ENCODE measurements at regions of chr2 and their contacts with region 1.

Region 1: GRCh38 chr2:17672583-17673317 is 80.9 kb downstream of the SMC6 start:
- DNase-seq: no peak
- ATAC-seq: no peak
- H3K4me3 ChIP-seq: no peak overlapping the region
- H3K4me3 Mint-ChIP-seq: no peak overlapping the region
- H3K27ac ChIP-seq: peak overlapping the region in 1 of 2 donors; percentile 22
- H3K27ac Mint-ChIP-seq: no peak overlapping the region
- H3K4me1 ChIP-seq: no peaks in the 10 kb centered on the region
- H3K4me1 Mint-ChIP-seq: no peaks in the 10 kb centered on the region
- H3K27me3 ChIP-seq: no peaks in the 10 kb centered on the region
- H3K27me3 Mint-ChIP-seq: no peaks in the 10 kb centered on the region
- CTCF ChIP-seq: no peak

Region 2: GRCh38 chr2:16773080-16773713 is 899.6 kb before region 1 on chr2:
- CTCF ChIA-PET with region 1: interaction called, 11 read pairs
- POLR2A ChIA-PET with region 1: no interaction called
- intact Hi-C with region 1: no loop called
- DNase-seq: peak; percentile 47
- ATAC-seq: peak; percentile 71
- H3K4me3 ChIP-seq: no peak overlapping the region
- H3K4me3 Mint-ChIP-seq: no peak overlapping the region
- H3K27ac ChIP-seq: no peak overlapping the region
- H3K27ac Mint-ChIP-seq: no peak overlapping the region
- H3K4me1 ChIP-seq: no peaks in the 10 kb centered on the region
- H3K4me1 Mint-ChIP-seq: peaks cover 2% of the 10 kb centered on the region
- H3K27me3 ChIP-seq: peaks cover 0 to 4% (median under 1%) of the 10 kb centered on the region in 4 experiments
- H3K27me3 Mint-ChIP-seq: peaks cover 19% of the 10 kb centered on the region
- CTCF ChIP-seq: peak; percentile 81

Region 3: DNA sequence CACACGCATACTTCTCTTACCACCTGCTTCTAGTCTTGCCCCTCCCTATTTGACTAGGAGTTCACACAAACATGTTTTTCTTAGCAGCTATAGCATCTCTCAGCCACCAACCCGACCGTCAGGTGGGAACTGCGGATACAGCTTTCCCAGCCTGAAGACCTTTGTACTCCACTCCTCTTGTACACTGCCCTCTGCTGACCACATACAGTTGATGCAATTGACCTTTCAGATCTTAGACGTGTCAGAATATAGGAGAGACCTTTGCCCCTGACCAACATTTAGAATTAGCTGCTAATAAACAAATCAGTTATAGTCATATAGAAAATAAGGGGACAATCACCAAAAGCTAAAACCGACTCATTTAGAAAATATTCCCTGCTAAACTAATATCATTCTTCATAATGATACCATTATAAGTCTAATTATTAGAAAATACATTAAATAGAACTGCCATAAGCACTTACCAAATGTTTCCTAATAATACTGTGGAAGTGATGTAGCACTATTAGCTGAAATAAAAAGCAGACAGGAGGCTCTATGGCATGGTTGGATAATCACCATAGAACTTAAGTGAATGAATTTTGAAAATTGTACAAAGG is 362.9 kb before region 1 on chr2:
- CTCF ChIA-PET with region 1: interaction called, 4 read pairs
- POLR2A ChIA-PET with region 1: no interaction called
- intact Hi-C with region 1: loop called (anchors 2 kb)
- DNase-seq: peak; percentile 58
- ATAC-seq: peak; percentile 76
- H3K4me3 ChIP-seq: no peak overlapping the region
- H3K4me3 Mint-ChIP-seq: no peak overlapping the region
- H3K27ac ChIP-seq: no peak overlapping the region
- H3K27ac Mint-ChIP-seq: no peak overlapping the region
- H3K4me1 ChIP-seq: no peaks in the 10 kb centered on the region
- H3K4me1 Mint-ChIP-seq: peaks cover 7% of the 10 kb centered on the region
- H3K27me3 ChIP-seq: no peaks in the 10 kb centered on the region
- H3K27me3 Mint-ChIP-seq: no peaks in the 10 kb centered on the region
- CTCF ChIP-seq: peak; percentile 77

Region 4: GRCh38 chr2:17646081-17646554 is 26.6 kb before region 1 on chr2:
- CTCF ChIA-PET with region 1: interaction called, 51 read pairs
- POLR2A ChIA-PET with region 1: no interaction called
- intact Hi-C with region 1: loop called (anchors 1 kb)
- DNase-seq: peak; percentile 62
- ATAC-seq: peak; percentile 56
- H3K4me3 ChIP-seq: no peak overlapping the region
- H3K4me3 Mint-ChIP-seq: no peak overlapping the region
- H3K27ac ChIP-seq: no peak overlapping the region
- H3K27ac Mint-ChIP-seq: no peak overlapping the region
- H3K4me1 ChIP-seq: peaks cover 0 to 3% of the 10 kb centered on the region in 2 donors
- H3K4me1 Mint-ChIP-seq: peaks cover 9% of the 10 kb centered on the region
- H3K27me3 ChIP-seq: no peaks in the 10 kb centered on the region
- H3K27me3 Mint-ChIP-seq: no peaks in the 10 kb centered on the region
- CTCF ChIP-seq: peak; percentile 80

Region 5: DNA sequence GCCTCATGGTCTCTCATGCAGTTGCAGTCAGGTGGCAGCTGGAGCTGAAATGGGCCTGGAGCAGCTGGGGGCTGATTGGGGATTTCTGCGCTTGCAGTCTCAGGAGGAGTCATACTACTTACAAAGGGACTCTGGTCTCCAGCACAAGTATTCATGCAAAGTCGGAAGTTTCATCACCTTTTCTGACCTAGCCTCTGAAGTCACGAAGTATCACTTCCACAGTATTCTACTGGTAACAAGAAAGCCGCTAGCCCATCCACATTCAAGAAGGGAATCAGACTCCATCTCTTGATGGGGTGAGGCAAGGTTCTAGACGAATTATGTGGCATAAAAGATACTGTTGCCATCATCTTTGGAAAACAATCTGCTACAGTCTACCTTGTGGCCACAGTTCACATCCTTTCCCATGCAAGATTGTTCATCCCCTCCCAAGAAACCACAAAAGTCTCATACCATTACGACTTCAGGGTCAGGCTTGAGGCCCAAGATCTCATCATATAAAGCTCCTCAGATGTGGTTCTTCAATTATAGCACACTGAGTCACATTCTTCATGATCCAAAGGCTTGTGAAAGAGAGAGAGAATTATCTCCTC is 14.4 kb before region 1 on chr2:
- CTCF ChIA-PET with region 1: interaction called, 34 read pairs
- POLR2A ChIA-PET with region 1: no interaction called
- intact Hi-C with region 1: no loop called
- DNase-seq: no peak
- ATAC-seq: no peak
- H3K4me3 ChIP-seq: no peak overlapping the region
- H3K4me3 Mint-ChIP-seq: no peak overlapping the region
- H3K27ac ChIP-seq: no peak overlapping the region
- H3K27ac Mint-ChIP-seq: no peak overlapping the region
- H3K4me1 ChIP-seq: no peaks in the 10 kb centered on the region
- H3K4me1 Mint-ChIP-seq: no peaks in the 10 kb centered on the region
- H3K27me3 ChIP-seq: no peaks in the 10 kb centered on the region
- H3K27me3 Mint-ChIP-seq: no peaks in the 10 kb centered on the region
- CTCF ChIP-seq: no peak

Region 6: DNA sequence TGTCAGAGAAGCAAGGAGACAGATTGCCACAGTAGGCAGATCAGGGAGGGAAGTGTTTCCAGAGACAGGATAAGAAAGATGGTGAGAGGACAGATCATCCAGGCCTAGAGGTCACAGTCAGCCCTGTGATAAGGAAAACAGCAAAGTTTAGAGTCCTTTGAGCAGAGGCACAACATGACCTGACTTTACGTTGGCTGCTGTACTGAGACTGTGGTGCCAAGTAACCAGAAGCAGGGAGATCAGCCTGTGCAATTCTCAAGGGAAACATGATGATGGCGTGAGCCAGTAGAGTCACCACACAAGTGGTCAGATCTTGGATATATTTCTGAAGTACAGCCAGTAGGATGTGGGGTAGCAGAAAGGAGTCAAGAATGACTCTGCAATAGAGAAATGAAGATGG is 37.1 kb after region 1 on chr2:
- CTCF ChIA-PET with region 1: interaction called, 11 read pairs
- POLR2A ChIA-PET with region 1: no interaction called
- intact Hi-C with region 1: no loop called
- DNase-seq: no peak
- ATAC-seq: no peak
- H3K4me3 ChIP-seq: no peak overlapping the region
- H3K4me3 Mint-ChIP-seq: no peak overlapping the region
- H3K27ac ChIP-seq: peak overlapping the region in 1 of 2 donors; percentile 3
- H3K27ac Mint-ChIP-seq: no peak overlapping the region
- H3K4me1 ChIP-seq: no peaks in the 10 kb centered on the region
- H3K4me1 Mint-ChIP-seq: no peaks in the 10 kb centered on the region
- H3K27me3 ChIP-seq: no peaks in the 10 kb centered on the region
- H3K27me3 Mint-ChIP-seq: no peaks in the 10 kb centered on the region
- CTCF ChIP-seq: no peak

Region 7: DNA sequence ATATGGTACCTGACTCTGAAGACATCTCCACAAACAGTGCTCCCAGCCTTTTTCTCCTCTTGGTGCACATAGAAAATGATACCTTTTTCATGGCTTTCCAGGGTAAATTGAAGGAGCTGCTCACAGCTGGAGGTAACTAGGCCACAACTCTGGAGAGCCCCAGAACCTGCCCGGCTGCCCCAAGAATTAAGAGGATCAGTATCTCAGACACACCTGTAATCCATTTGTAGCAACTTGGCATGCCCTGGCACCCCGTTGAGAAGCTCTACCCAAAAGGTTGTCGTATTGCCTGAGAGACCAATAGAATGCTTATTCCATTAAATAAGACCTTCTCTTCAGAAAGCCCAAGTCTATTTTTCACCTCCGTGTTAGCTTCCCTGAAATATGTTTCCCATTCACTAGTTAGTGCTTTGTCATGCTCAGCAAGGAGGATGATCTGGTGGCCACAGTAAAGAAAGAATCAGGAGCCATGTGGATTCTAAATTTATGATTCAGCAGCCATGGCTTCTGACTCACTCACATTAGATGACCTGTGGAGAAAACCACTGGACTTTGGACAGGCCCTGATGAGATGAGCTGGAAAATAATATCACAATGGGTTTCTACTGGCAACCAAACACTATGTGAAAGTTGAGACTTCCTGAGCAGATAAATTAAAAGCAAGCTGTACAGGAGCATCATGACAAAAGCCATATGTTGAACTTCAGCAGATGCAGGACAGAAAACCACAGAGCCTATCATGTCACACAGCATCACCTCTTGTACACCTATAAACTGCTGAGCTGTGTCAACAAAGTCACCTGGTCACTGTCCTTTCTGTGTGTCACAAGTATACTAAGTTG is 1939.0 kb after region 1 on chr2:
- CTCF ChIA-PET with region 1: no interaction called
- POLR2A ChIA-PET with region 1: no interaction called
- intact Hi-C with region 1: no loop called
- DNase-seq: no peak
- ATAC-seq: no peak
- H3K4me3 ChIP-seq: no peak overlapping the region
- H3K4me3 Mint-ChIP-seq: no peak overlapping the region
- H3K27ac ChIP-seq: no peak overlapping the region
- H3K27ac Mint-ChIP-seq: no peak overlapping the region
- H3K4me1 ChIP-seq: no peaks in the 10 kb centered on the region
- H3K4me1 Mint-ChIP-seq: no peaks in the 10 kb centered on the region
- H3K27me3 ChIP-seq: no peaks in the 10 kb centered on the region
- H3K27me3 Mint-ChIP-seq: peaks cover 8% of the 10 kb centered on the region
- CTCF ChIP-seq: no peak

Measured in B cell (primary cell).